RWPE1 (cell line): ENCODE measurements at regions of chr19 and their contacts with region 1.

Region 1: DNA sequence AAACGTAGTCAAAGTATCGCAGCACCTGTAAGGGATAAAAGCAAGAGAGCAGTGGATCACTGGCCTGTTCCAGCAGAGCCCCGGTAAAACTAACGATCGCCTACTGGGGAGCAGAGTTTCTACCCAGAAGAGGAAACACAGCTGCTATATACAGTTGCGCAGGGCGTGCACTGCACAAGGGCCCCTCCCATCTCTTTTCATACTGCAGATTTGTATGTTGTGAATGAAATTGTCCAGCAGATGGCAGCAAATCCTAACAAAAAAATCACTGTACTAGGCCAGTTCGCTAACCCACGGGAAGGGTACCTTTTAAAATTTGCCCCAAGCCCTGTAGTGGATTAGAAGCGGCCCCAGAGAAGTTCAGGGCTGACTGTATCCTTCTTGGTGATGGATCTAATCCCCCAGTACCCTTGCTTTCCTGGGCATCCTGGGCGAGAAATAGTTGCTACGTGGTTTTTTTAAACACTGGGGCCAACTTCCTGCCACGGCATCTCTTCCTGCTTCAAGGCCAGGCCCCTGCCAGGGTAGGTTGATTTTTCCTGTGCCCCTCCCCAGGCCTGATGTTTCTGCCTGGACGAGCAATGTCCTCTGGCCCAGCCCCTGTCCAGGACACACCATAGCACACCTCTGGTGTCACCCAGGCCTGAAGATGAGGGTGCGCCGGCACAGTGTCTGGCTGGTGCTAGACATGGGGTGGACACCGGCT is 127.0 kb downstream of the IER2 start:
- DNase-seq: peak; percentile 77
- H3K27ac ChIP-seq: no peak overlapping the region
- CTCF ChIP-seq: peak; percentile 60

Region 2: DNA sequence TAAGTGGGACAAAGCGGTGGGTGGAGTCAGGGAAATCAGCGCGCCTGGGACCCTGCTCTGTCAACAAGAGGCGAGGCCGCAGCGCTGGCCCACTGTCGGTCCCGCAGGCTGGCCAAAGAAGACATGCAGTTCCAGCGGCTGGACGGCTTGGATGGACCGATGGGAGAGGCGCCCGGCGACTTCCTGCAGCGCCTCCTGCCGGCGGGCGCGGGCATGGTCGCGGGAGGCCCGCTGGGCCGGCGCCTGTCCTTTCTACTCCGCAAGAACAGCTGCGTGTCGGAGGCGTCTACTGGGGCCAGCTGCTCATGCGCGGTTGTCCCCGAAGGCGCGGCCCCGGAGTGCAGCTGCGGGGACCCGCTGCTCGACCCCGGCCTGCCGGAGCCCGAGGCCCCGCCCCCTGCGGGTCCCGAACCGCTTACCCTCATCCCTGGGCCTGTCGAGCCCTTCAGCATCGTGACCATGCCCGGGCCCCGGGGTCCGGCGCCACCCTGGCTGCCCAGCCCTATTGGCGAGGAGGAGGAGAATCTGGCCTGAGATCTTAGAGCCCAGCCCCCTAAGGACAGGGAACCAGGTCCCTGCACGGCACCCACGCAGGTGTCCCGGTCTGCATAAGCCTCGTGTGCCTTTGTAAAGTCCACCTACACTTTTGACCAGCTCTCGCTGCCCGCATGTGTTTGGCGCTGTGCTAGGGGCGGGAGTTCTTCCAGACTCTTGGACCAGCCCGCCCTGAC is 519.5 kb before region 1 on chr19:
- CTCF ChIA-PET with region 1: no interaction called
- POLR2A ChIA-PET with region 1: no interaction called
- DNase-seq: peak; percentile 27
- H3K27ac ChIP-seq: no peak overlapping the region
- CTCF ChIP-seq: peak; percentile 76

Region 3: GRCh38 chr19:13588957-13589833 is 311.9 kb after region 1 on chr19:
- CTCF ChIA-PET with region 1: interaction called, 29 read pairs
- POLR2A ChIA-PET with region 1: no interaction called
- DNase-seq: peak; percentile 71
- H3K27ac ChIP-seq: no peak overlapping the region
- CTCF ChIP-seq: peak; percentile 99

Region 4: GRCh38 chr19:13633109-13633508 is 355.9 kb after region 1 on chr19:
- CTCF ChIA-PET with region 1: no interaction called
- POLR2A ChIA-PET with region 1: no interaction called
- DNase-seq: no peak
- H3K27ac ChIP-seq: peak overlapping the region; percentile 30; the same call in 1 of the 2 replicates
- CTCF ChIP-seq: no peak

Region 5: GRCh38 chr19:14595516-14595915 is 1318.3 kb after region 1 on chr19:
- CTCF ChIA-PET with region 1: no interaction called
- POLR2A ChIA-PET with region 1: no interaction called
- DNase-seq: no peak
- H3K27ac ChIP-seq: no peak overlapping the region
- CTCF ChIP-seq: no peak